Dendritic cell treated with granulocyte-macrophage colony-stimulating factor and Interleukin-4, amounts not matched to agents 40 ng/mL and 50 ng/mL, for 4 days (primary cell): ENCODE measurements at regions of chr12 and their contacts with region 1.

Region 1: DNA sequence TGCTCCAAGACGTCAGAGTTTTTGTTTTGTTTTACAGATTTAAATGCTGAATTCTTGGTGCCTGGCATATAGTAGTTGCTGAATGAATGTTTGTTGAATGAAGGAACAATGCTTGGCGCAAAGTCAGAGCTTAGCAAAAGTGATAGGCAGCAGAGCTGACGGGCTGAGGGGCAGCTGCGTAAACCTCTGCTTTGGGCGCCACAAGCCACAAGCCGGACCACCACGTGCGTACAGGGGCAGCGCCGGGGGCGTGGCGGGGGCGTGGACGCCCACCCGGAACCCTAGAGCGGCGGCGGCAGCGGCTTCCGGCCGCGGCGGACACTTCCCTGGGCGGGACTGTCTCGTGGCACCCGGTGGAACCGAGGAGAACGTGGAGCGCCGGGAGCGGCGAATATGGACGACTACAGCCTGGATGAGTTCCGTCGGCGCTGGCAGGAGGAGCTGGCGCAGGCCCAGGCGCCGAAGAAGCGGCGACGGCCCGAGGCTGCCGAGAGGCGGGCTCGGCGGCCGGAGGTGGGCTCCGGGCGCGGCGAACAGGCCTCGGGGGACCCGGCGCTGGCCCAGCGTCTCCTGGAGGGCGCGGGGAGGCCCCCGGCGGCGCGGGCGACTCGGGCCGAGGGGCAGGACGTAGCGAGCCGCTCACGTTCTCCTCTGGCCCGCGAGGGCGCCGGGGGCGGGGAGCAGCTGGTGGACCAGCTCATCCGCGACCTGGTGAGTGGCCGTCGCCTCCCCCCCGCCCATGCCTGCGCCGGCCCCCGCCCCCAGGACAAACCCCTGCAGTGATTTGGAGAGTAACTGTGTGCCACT is at the start of gene FBXW8:
- H3K4me3 Mint-ChIP-seq: peak within 1 kb of the TSS; percentile 93
- H3K27ac Mint-ChIP-seq: peak within 1 kb of the TSS; percentile 76
- H3K4me1 Mint-ChIP-seq: peaks cover 32% of the 10 kb centered on the region
- H3K27me3 Mint-ChIP-seq: peaks cover 16% of the 10 kb centered on the region

Region 2: GRCh38 chr12:116799955-116800354 is 110.9 kb before region 1 on chr12:
- intact Hi-C with region 1: no loop called
- H3K4me3 Mint-ChIP-seq: no peak overlapping the region
- H3K27ac Mint-ChIP-seq: no peak overlapping the region
- H3K4me1 Mint-ChIP-seq: no peaks in the 10 kb centered on the region
- H3K27me3 Mint-ChIP-seq: peaks cover 1% of the 10 kb centered on the region

Region 3: GRCh38 chr12:116818948-116819832 is 91.7 kb before region 1 on chr12:
- intact Hi-C with region 1: loop called (anchors 5 kb)
- H3K4me3 Mint-ChIP-seq: peak overlapping the region; percentile 91
- H3K27ac Mint-ChIP-seq: peak overlapping the region; percentile 89
- H3K4me1 Mint-ChIP-seq: peaks cover 16% of the 10 kb centered on the region
- H3K27me3 Mint-ChIP-seq: peaks cover 20% of the 10 kb centered on the region